ENCODE measurements at regions of chr9 and their contacts with region 1.

Region 1: GRCh38 chr9:128361986-128362646 is 9.1 kb upstream of the URM1 start:
- DNase-seq: peak; percentile 82 to 91
- ATAC-seq: peak; percentile 87 to 94
- H3K4me3 ChIP-seq: peak overlapping the region; percentile 38
- H3K27ac ChIP-seq: peak overlapping the region; percentile 62 to 90
- H3K4me1 ChIP-seq: peaks cover 13% of the 10 kb centered on the region
- CTCF ChIP-seq: peak; percentile 84
- EP300 ChIP-seq: no peak
- POLR2A ChIP-seq: no peak
- RAD21 ChIP-seq: peak; percentile 84 to 85

Region 2: DNA sequence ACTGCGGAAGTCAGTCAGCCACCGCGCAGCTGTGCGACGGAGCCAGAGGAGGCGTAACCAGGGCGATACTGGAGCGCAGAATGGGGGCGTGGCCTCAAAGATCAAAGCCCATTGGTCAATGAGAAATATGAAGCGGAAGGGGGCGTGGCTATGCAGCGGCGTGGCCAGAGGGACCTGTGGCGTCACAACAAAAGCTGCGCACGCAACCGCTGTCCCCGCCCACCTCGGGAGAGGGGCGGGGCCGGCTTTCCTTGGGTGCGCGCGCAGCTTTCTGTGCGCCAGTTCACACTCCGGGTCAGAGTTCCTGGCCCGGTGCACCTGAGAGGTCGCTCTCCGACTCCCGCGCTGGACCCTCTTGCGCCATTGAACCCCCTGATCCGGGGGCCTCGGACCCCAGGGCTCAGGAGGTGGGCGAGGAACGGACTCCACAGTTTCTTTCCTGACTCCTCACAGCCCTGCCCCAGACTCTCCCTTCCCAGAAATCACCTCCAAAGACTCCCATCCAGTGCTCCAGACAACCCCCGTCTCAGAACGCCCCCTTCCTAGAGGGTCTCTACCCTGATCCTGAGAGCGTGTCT is 86.0 kb before region 1 on chr9 and contains the starts of genes GOLGA2 and SWI5:
- CTCF ChIA-PET with region 1: interaction called, 10 read pairs
- POLR2A ChIA-PET with region 1: interaction called, 4 read pairs
- DNase-seq: peak; percentile 97 to 99
- ATAC-seq: peak; percentile 91 to 97
- H3K4me3 ChIP-seq: peak within 1 kb of the TSS; percentile 95
- H3K27ac ChIP-seq: peak within 1 kb of the TSS; percentile 94
- H3K4me1 ChIP-seq: peaks cover 12% of the 10 kb centered on the region; the same call in 2 of the 3 replicates
- CTCF ChIP-seq: no peak
- EP300 ChIP-seq: no peak
- POLR2A ChIP-seq: peak; percentile 96
- RAD21 ChIP-seq: no peak
- polyA plus RNA-seq, gene GOLGA2: 55.3 and 61.9 TPM in 2 replicates
- polyA plus RNA-seq, gene SWI5: 66.8 and 67.6 TPM in 2 replicates

Region 3: GRCh38 chr9:128339771-128340690 is 22.1 kb before region 1 on chr9 and contains the start of gene SLC27A4:
- CTCF ChIA-PET with region 1: interaction called, 128 read pairs
- POLR2A ChIA-PET with region 1: interaction called, 7 read pairs
- DNase-seq: peak; percentile 81 to 93
- ATAC-seq: peak; percentile 86 to 89
- H3K4me3 ChIP-seq: peak within 1 kb of the TSS; percentile 90
- H3K27ac ChIP-seq: peak within 1 kb of the TSS; percentile 89 to 92
- H3K4me1 ChIP-seq: 0 out of 3 replicates have a peak, but pooled peaks cover 4% of the 10 kb centered on the region
- CTCF ChIP-seq: no peak
- EP300 ChIP-seq: no peak
- POLR2A ChIP-seq: peak; percentile 57
- RAD21 ChIP-seq: no peak
- polyA plus RNA-seq, gene SLC27A4: 14.5 and 14.9 TPM in 2 replicates

Region 4: GRCh38 chr9:128383007-128383753 is 21.1 kb after region 1 on chr9:
- CTCF ChIA-PET with region 1: interaction called, 19 read pairs
- POLR2A ChIA-PET with region 1: no interaction called
- DNase-seq: no peak
- ATAC-seq: no peak
- H3K4me3 ChIP-seq: no peak overlapping the region
- H3K27ac ChIP-seq: no peak overlapping the region
- H3K4me1 ChIP-seq: no peaks in the 10 kb centered on the region
- CTCF ChIP-seq: no peak
- EP300 ChIP-seq: no peak
- POLR2A ChIP-seq: no peak
- RAD21 ChIP-seq: no peak

Region 5: GRCh38 chr9:128412120-128412790 is 50.1 kb after region 1 on chr9:
- CTCF ChIA-PET with region 1: interaction called, 52 read pairs
- POLR2A ChIA-PET with region 1: no interaction called
- DNase-seq: peak; percentile 30 to 52
- ATAC-seq: peak in 1 of 2 experiments; percentile 71; a peak in 3 of 6 replicates
- H3K4me3 ChIP-seq: no peak overlapping the region
- H3K27ac ChIP-seq: no peak overlapping the region; a peak in 1 of 6 replicates
- H3K4me1 ChIP-seq: no peaks in the 10 kb centered on the region
- CTCF ChIP-seq: peak; percentile 42; the same call in 2 of the 3 replicates
- EP300 ChIP-seq: no peak
- POLR2A ChIP-seq: no peak
- RAD21 ChIP-seq: peak; percentile 60 to 79

Region 6: DNA sequence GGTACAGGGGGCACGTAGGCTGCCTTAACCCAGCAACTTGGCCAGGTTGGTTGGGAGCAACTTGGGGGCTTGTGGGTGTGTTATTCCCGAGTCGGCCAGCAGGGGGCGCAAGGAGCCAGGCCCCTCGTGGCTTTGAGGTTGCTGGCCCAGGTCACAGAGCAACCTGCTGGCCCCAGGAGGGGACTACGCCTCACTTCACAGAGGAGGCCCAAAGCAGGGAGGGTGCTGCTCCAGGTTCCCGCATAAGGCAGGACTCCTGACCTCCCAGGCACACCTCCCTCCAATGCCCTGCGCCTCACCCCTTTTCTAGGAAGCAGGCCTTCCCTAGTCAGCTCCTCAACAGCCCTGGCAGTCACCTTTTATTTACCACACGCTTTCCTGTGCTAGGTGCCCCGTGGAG is 501.5 kb after region 1 on chr9:
- CTCF ChIA-PET with region 1: no interaction called
- POLR2A ChIA-PET with region 1: no interaction called
- DNase-seq: peak; percentile 78 to 82
- ATAC-seq: peak; percentile 96 to 99
- H3K4me3 ChIP-seq: no peak overlapping the region
- H3K27ac ChIP-seq: peak overlapping the region; percentile 62 to 79; a peak in 4 of 6 replicates
- H3K4me1 ChIP-seq: peaks cover 16% of the 10 kb centered on the region; the same call in 2 of the 3 replicates
- CTCF ChIP-seq: peak; percentile 87
- EP300 ChIP-seq: no peak
- POLR2A ChIP-seq: no peak
- RAD21 ChIP-seq: peak; percentile 86 to 88